ENCODE measurements at regions of chr4 and their contacts with region 1.

Region 1: DNA sequence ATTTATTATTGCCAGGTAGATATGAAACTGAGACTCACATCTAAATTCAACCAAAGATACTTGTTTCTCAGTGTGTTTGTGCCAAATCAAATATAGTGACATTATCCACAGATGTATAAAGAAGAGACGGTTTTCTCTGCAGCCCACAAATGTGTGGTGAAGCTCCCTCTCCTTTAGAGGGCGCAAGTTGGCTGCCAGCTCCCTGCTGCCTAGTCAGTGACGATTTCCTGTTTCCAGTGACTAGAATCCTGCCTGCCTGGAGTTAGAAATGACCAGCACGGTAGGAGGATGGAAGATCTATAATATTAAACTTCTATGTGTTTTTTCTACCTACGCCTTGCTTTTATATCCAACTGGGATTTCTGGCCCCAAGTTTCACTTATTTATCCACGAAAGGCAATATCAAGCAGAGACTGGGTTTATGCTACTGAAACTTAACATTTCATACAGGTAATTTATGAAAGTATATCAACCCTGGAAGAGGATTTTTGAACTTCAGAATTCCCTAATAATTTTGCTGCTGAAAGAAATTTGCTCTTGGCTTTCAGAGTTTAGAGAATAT is 1793.7 kb upstream of the TENM3 start:
- DNase-seq: no peak
- H3K4me3 ChIP-seq: no peak overlapping the region
- H3K27ac ChIP-seq: no peak overlapping the region
- H3K4me1 ChIP-seq: no peaks in the 10 kb centered on the region
- H3K27me3 ChIP-seq: no peaks in the 10 kb centered on the region
- CTCF ChIP-seq: peak in 1 of 4 experiments; percentile 4
- EP300 ChIP-seq: no peak
- POLR2A ChIP-seq: no peak

Region 2: GRCh38 chr4:180665994-180666824 is 216.7 kb after region 1 on chr4:
- intact Hi-C with region 1: loop called (anchors 2 kb)
- DNase-seq: no peak
- H3K4me3 ChIP-seq: no peak overlapping the region
- H3K27ac ChIP-seq: no peak overlapping the region
- H3K4me1 ChIP-seq: peaks cover 0 to 3% (median 0%) of the 10 kb centered on the region in 4 donors
- H3K27me3 ChIP-seq: no peaks in the 10 kb centered on the region
- CTCF ChIP-seq: peak in 1 of 4 experiments; percentile 48
- EP300 ChIP-seq: no peak
- POLR2A ChIP-seq: no peak